ENCODE measurements at regions of chr6 and their contacts with region 1.

Region 1: GRCh38 chr6:71478834-71479541 is 190.4 kb downstream of the OGFRL1 start:
- DNase-seq: peak; percentile 95
- H3K4me3 ChIP-seq: peak overlapping the region in 1 of 3 experiments; percentile 31
- H3K27ac ChIP-seq: peak overlapping the region; percentile 98
- H3K4me1 ChIP-seq: peaks cover 38% of the 10 kb centered on the region
- H3K27me3 ChIP-seq: no peaks in the 10 kb centered on the region
- CTCF ChIP-seq: no peak
- POLR2A ChIP-seq: peak; percentile 34

Region 2: DNA sequence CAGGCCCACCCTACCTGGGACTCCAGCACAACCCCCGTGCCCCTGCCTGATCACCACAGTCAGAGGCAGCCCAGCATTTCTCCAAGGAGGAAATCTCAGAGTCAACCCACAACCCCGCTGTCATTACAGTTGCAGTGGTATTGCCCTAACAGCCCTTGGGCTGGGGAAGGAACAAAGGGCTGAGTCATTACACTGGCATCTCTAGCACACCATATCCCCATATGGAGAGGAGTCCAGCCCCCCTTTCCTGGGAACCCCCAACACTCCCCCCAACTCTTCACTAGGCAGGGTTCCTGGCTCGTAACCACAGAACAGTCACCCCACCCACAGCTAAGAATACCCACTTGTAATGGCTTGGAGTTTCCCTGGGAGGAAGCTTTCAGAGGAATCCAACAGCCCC is 339.7 kb before region 1 on chr6:
- CTCF ChIA-PET with region 1: no interaction called
- POLR2A ChIA-PET with region 1: no interaction called
- dilution Hi-C with region 1: no loop called
- intact Hi-C with region 1: no loop called
- DNase-seq: no peak
- H3K4me3 ChIP-seq: no peak overlapping the region
- H3K27ac ChIP-seq: no peak overlapping the region
- H3K4me1 ChIP-seq: no peaks in the 10 kb centered on the region
- H3K27me3 ChIP-seq: no peaks in the 10 kb centered on the region
- CTCF ChIP-seq: no peak
- POLR2A ChIP-seq: no peak

Region 3: GRCh38 chr6:71190809-71191208 is 288.2 kb before region 1 on chr6:
- CTCF ChIA-PET with region 1: interaction called, 16 read pairs
- POLR2A ChIA-PET with region 1: no interaction called
- dilution Hi-C with region 1: no loop called
- intact Hi-C with region 1: no loop called
- DNase-seq: peak; percentile 41
- H3K4me3 ChIP-seq: no peak overlapping the region
- H3K27ac ChIP-seq: no peak overlapping the region
- H3K4me1 ChIP-seq: no peaks in the 10 kb centered on the region
- H3K27me3 ChIP-seq: no peaks in the 10 kb centered on the region
- CTCF ChIP-seq: peak; percentile 10 to 14
- POLR2A ChIP-seq: no peak

Region 4: GRCh38 chr6:71349395-71349794 is 129.6 kb before region 1 on chr6:
- CTCF ChIA-PET with region 1: interaction called, 13 read pairs
- POLR2A ChIA-PET with region 1: no interaction called
- dilution Hi-C with region 1: no loop called
- intact Hi-C with region 1: no loop called
- DNase-seq: peak; percentile 53
- H3K4me3 ChIP-seq: no peak overlapping the region
- H3K27ac ChIP-seq: no peak overlapping the region
- H3K4me1 ChIP-seq: no peaks in the 10 kb centered on the region
- H3K27me3 ChIP-seq: no peaks in the 10 kb centered on the region
- CTCF ChIP-seq: peak; percentile 37 to 41
- POLR2A ChIP-seq: no peak

Region 5: GRCh38 chr6:71393981-71394432 is 85.0 kb before region 1 on chr6:
- CTCF ChIA-PET with region 1: interaction called, 14 read pairs
- POLR2A ChIA-PET with region 1: no interaction called
- dilution Hi-C with region 1: no loop called
- intact Hi-C with region 1: loop called (anchors 2 kb)
- DNase-seq: no peak
- H3K4me3 ChIP-seq: peak overlapping the region in 1 of 3 experiments; percentile 12
- H3K27ac ChIP-seq: peak overlapping the region; percentile 91
- H3K4me1 ChIP-seq: peaks cover 56% of the 10 kb centered on the region
- H3K27me3 ChIP-seq: no peaks in the 10 kb centered on the region
- CTCF ChIP-seq: no peak
- POLR2A ChIP-seq: no peak

Region 6: GRCh38 chr6:71420693-71421328 is 58.2 kb before region 1 on chr6:
- CTCF ChIA-PET with region 1: interaction called, 20 read pairs
- POLR2A ChIA-PET with region 1: no interaction called
- dilution Hi-C with region 1: no loop called
- intact Hi-C with region 1: loop called (anchors 1 kb)
- DNase-seq: peak; percentile 97
- H3K4me3 ChIP-seq: peak overlapping the region; percentile 65 to 97 (median 93)
- H3K27ac ChIP-seq: peak overlapping the region; percentile 71
- H3K4me1 ChIP-seq: peaks cover 18% of the 10 kb centered on the region
- H3K27me3 ChIP-seq: no peaks in the 10 kb centered on the region
- CTCF ChIP-seq: no peak
- POLR2A ChIP-seq: peak; percentile 89

Region 7: DNA sequence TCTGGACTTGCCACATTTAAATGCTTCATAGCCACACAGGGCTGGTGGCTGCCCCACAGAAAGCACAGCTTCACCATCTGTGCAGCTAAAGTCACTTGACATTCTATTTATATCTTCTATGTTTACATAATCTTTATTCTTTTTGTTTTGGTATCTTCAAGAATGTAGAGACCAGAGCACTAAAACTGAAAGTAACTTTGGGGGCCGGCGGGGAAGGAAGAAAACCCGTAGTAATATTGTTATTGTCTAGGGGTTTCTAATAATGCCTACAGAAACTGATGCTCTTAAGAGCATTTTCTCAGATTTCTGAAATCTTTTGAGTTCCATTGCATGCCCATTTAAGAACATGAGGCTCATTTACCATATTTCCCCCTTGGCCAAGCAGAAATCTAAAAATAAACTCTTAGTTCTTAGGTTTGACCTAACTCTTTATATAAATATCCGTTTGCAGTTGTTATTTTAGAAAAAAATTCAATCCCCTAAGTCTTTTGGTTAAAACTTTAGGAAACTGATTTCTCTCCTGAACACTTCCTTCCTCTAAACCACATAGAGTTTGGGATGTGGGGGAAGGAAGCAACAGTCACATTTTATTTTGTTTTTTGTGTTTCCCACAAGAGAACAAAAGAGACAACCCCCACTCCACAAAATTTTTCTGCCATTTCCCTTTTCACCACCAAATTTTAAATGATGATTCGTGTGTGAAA is 17.2 kb after region 1 on chr6:
- CTCF ChIA-PET with region 1: interaction called, 5 read pairs
- POLR2A ChIA-PET with region 1: no interaction called
- dilution Hi-C with region 1: no loop called
- intact Hi-C with region 1: loop called (anchors 1 kb)
- DNase-seq: peak; percentile 67
- H3K4me3 ChIP-seq: peak overlapping the region in 2 of 3 experiments; percentile 61 to 74
- H3K27ac ChIP-seq: peak overlapping the region; percentile 66
- H3K4me1 ChIP-seq: peaks cover 17% of the 10 kb centered on the region
- H3K27me3 ChIP-seq: no peaks in the 10 kb centered on the region
- CTCF ChIP-seq: no peak
- POLR2A ChIP-seq: no peak

Region 8: GRCh38 chr6:71533939-71534379 is 55.0 kb after region 1 on chr6:
- CTCF ChIA-PET with region 1: no interaction called
- POLR2A ChIA-PET with region 1: no interaction called
- dilution Hi-C with region 1: no loop called
- intact Hi-C with region 1: loop called (anchors 2 kb)
- DNase-seq: peak; percentile 36
- H3K4me3 ChIP-seq: no peak overlapping the region
- H3K27ac ChIP-seq: no peak overlapping the region
- H3K4me1 ChIP-seq: no peaks in the 10 kb centered on the region
- H3K27me3 ChIP-seq: peaks cover 9 to 14% of the 10 kb centered on the region in 2 experiments
- CTCF ChIP-seq: peak; percentile 33 to 42
- POLR2A ChIP-seq: no peak

Measured in endothelial cell of umbilical vein (primary cell).